Body of pancreas (tissue), 4 donors: ENCODE measurements at regions of chr15 and their contacts with region 1.

Region 1: GRCh38 chr15:40416056-40416455 is 10.5 kb downstream of the IVD start:
- DNase-seq: no peak
- ATAC-seq: no peak
- H3K4me3 ChIP-seq: no peak overlapping the region
- H3K27ac ChIP-seq: no peak overlapping the region
- H3K4me1 ChIP-seq: peaks cover 32% of the 10 kb centered on the region
- H3K27me3 ChIP-seq: no peaks in the 10 kb centered on the region
- CTCF ChIP-seq: no peak
- POLR2A ChIP-seq: no peak

Region 2: GRCh38 chr15:40367686-40368611 is 48.1 kb before region 1 on chr15:
- intact Hi-C with region 1: loop called (anchors 5 kb)
- DNase-seq: peak; percentile 84 to 93 (median 88)
- ATAC-seq: peak; percentile 85
- H3K4me3 ChIP-seq: no peak overlapping the region
- H3K27ac ChIP-seq: peak overlapping the region; percentile 37 to 80 (median 74)
- H3K4me1 ChIP-seq: peaks cover 18% of the 10 kb centered on the region
- H3K27me3 ChIP-seq: no peaks in the 10 kb centered on the region
- CTCF ChIP-seq: peak; percentile 75 to 98 (median 89)
- POLR2A ChIP-seq: peak in 2 of 3 donors; percentile 33 to 49